ENCODE measurements at regions of chr1 and their contacts with region 1.

Region 1: DNA sequence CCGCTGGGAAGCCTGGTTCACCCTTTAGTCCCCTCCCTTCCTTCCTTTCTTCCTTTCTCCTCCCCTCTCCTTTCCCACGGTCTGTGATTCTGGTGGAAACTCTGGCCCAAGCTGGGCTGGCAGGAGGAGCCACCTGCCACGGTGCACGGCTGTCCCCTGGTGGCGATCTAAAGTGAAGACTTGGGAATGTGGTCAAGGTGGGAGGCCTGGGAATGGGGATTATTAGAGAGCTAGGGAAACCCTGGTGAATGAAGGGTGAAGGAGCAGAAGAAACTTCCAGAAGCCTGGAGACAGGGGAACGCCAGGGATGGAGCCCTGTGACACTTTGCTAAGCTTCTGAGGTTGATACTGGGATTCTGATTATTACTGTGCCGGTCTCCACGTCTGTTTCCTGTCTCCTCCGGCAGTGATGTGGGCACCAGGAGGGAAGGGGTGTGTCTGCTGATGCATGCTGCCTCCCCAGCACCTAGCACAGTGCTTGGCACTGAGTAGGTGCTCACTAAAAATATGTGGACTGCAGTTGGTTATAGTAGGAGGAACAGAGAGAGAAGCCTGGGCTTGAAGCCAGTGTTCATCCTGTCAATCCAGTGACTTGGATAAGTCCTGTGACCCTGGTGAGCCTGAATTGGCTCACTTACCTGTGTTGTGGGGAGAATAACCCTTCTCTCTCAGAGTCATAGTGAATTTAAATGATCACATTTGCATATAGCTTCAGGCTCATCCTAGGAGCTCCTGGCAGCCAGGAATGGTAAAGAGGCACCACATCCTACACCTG is 71.2 kb upstream of the NBPF3 start:
- DNase-seq: peak; percentile 81 to 87
- ATAC-seq: peak; percentile 87 to 98 (median 92)
- H3K4me3 ChIP-seq: no peak overlapping the region
- H3K27ac ChIP-seq: no peak overlapping the region
- H3K4me1 ChIP-seq: no peaks in the 10 kb centered on the region
- H3K27me3 ChIP-seq: no peaks in the 10 kb centered on the region
- CTCF ChIP-seq: peak; percentile 97

Region 2: GRCh38 chr1:21232044-21232443 is 136.7 kb before region 1 on chr1:
- intact Hi-C with region 1: loop called (anchors 1 to 2 kb)
- DNase-seq: no peak
- ATAC-seq: peak; percentile 52 to 83 (median 68)
- H3K4me3 ChIP-seq: no peak overlapping the region
- H3K27ac ChIP-seq: no peak overlapping the region
- H3K4me1 ChIP-seq: no peaks in the 10 kb centered on the region
- H3K27me3 ChIP-seq: no peaks in the 10 kb centered on the region
- CTCF ChIP-seq: peak; percentile 80

Region 3: DNA sequence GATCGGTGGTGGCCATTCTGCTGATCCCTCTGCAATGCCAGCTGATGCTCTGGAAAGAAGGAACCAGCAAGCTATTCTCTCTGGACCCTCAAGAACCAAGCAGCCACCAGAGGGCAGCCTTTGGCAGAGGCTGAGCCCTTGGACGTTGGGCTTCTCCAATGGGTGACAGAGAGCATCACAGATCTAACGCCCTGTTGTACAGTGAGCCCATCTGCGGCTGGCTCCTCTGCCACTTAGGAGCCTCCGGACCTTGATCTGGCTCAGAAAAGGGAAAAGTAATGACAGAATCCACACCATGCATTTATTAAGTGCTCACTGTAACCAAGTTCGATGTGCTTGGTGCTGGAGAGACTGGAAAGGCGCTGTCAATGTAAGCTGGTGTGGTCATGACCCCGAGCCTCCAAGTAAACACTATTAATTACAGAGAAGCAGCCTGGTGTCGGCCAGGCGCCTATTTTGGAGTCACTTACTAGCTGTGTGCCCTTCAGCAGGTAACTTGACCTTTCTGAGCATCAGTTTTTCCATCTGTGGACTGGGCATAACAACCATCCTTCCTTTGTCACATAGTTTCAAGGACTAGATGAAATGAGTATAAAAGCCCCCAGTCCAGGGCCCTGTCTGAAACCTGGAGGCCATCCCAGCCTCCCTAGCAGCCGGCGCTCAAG is 113.3 kb before region 1 on chr1:
- intact Hi-C with region 1: loop called (anchors 1 kb)
- DNase-seq: peak; percentile 86 to 91
- ATAC-seq: peak; percentile 82 to 93 (median 87)
- H3K4me3 ChIP-seq: no peak overlapping the region
- H3K27ac ChIP-seq: no peak overlapping the region
- H3K4me1 ChIP-seq: peaks cover under 1% of the 10 kb centered on the region
- H3K27me3 ChIP-seq: peaks cover 0 to 2% (median 0%) of the 10 kb centered on the region in 3 donors
- CTCF ChIP-seq: peak; percentile 84

Region 4: DNA sequence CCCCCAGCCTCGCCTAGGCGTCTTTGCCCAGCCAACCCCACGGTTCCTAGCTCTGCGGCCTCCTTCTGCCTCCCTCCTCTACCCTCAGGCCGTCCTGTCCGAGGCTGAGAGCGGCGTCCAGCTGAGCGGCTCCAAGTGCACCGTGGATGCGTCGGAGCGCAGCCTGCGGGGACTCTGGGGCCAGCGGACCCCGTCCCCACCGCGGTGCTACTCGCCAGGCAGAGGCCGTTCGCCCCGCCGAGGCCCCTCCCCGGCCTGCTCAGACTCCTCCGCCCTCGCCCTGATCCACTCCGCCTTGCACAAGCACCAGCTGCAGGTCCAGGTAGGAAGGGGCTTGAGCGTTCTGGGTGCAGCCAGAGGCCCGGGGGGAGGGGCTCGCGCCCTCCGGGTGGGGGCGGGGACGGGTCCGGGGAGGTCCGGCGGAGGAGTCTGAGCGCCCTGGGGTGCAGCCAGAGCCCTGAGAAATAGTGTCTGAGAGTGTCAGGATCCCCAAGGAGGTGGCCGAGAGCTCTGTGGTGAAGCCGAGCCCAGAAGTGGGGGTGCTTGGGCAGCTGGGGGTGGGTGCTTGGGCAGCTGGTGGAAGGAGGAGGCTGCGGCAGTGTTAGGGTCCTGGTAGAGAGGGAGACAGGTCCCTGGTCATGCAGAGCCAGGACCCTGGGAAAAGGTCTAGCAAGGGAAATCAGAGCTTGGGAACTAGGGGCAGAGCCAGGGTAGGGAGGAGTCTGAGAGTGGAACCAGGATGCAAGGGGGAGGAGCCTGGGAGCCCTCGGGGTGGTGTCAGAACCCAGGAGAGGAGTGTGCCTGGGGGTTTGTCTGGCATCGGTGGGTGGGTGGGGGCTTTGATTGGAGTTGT is 68.0 kb after region 1 on chr1:
- intact Hi-C with region 1: no loop called
- DNase-seq: no peak
- ATAC-seq: no peak
- H3K4me3 ChIP-seq: no peak overlapping the region
- H3K27ac ChIP-seq: no peak overlapping the region
- H3K4me1 ChIP-seq: no peaks in the 10 kb centered on the region
- H3K27me3 ChIP-seq: peaks cover 0 to 38% (median 10%) of the 10 kb centered on the region in 3 donors
- CTCF ChIP-seq: no peak

Region 5: GRCh38 chr1:21552715-21553114 is 184.0 kb after region 1 on chr1:
- intact Hi-C with region 1: no loop called
- DNase-seq: no peak
- ATAC-seq: no peak
- H3K4me3 ChIP-seq: no peak overlapping the region
- H3K27ac ChIP-seq: no peak overlapping the region
- H3K4me1 ChIP-seq: no peaks in the 10 kb centered on the region
- H3K27me3 ChIP-seq: peaks cover 0 to 32% (median 2%) of the 10 kb centered on the region in 3 donors
- CTCF ChIP-seq: no peak